GM12878 (cell line): ENCODE measurements at regions of chr1 and their contacts with region 1.

Region 1: GRCh38 chr1:4585216-4585615 is 69.2 kb upstream of the AJAP1 start:
- DNase-seq: no peak
- ATAC-seq: peak; percentile 45; the same call in 1 of the 3 replicates
- H3K4me3 ChIP-seq: no peak overlapping the region
- H3K27ac ChIP-seq: no peak overlapping the region
- H3K4me1 ChIP-seq: no peaks in the 10 kb centered on the region
- H3K27me3 ChIP-seq: no peaks in the 10 kb centered on the region
- CTCF ChIP-seq: peak; percentile 31 to 71 (median 67)
- EP300 ChIP-seq: no peak
- POLR2A ChIP-seq: no peak
- RAD21 ChIP-seq: no peak

Region 2: GRCh38 chr1:4549930-4550329 is 35.3 kb before region 1 on chr1:
- CTCF ChIA-PET with region 1: no interaction called
- POLR2A ChIA-PET with region 1: no interaction called
- RAD21 ChIA-PET with region 1: no interaction called
- SMC1A ChIA-PET with region 1: no interaction called
- in situ Hi-C with region 1: no loop called
- intact Hi-C with region 1: no loop called
- DNase-seq: no peak
- ATAC-seq: no peak
- H3K4me3 ChIP-seq: no peak overlapping the region
- H3K27ac ChIP-seq: no peak overlapping the region
- H3K4me1 ChIP-seq: no peaks in the 10 kb centered on the region
- H3K27me3 ChIP-seq: no peaks in the 10 kb centered on the region
- CTCF ChIP-seq: no peak
- EP300 ChIP-seq: no peak
- POLR2A ChIP-seq: no peak
- RAD21 ChIP-seq: no peak

Region 3: GRCh38 chr1:4573528-4573927 is 11.7 kb before region 1 on chr1:
- CTCF ChIA-PET with region 1: interaction called, 10 read pairs
- POLR2A ChIA-PET with region 1: no interaction called
- RAD21 ChIA-PET with region 1: no interaction called
- SMC1A ChIA-PET with region 1: no interaction called
- in situ Hi-C with region 1: no loop called
- intact Hi-C with region 1: no loop called
- DNase-seq: no peak
- ATAC-seq: no peak
- H3K4me3 ChIP-seq: no peak overlapping the region
- H3K27ac ChIP-seq: no peak overlapping the region
- H3K4me1 ChIP-seq: no peaks in the 10 kb centered on the region
- H3K27me3 ChIP-seq: no peaks in the 10 kb centered on the region
- CTCF ChIP-seq: no peak
- EP300 ChIP-seq: no peak
- POLR2A ChIP-seq: no peak
- RAD21 ChIP-seq: no peak